Activated naive CD4-positive, alpha-beta T cell treated with anti-CD3 and anti-CD28 coated beads for 36 hours (primary cell): ENCODE measurements at regions of chr5 and their contacts with region 1.

Region 1: GRCh38 chr5:43631182-43631910 is 28.4 kb downstream of the NNT start:
- DNase-seq: peak; percentile 40
- H3K4me3 Mint-ChIP-seq: no peak overlapping the region
- H3K27ac Mint-ChIP-seq: no peak overlapping the region
- H3K4me1 Mint-ChIP-seq: no peaks in the 10 kb centered on the region
- H3K27me3 Mint-ChIP-seq: no peaks in the 10 kb centered on the region

Region 2: DNA sequence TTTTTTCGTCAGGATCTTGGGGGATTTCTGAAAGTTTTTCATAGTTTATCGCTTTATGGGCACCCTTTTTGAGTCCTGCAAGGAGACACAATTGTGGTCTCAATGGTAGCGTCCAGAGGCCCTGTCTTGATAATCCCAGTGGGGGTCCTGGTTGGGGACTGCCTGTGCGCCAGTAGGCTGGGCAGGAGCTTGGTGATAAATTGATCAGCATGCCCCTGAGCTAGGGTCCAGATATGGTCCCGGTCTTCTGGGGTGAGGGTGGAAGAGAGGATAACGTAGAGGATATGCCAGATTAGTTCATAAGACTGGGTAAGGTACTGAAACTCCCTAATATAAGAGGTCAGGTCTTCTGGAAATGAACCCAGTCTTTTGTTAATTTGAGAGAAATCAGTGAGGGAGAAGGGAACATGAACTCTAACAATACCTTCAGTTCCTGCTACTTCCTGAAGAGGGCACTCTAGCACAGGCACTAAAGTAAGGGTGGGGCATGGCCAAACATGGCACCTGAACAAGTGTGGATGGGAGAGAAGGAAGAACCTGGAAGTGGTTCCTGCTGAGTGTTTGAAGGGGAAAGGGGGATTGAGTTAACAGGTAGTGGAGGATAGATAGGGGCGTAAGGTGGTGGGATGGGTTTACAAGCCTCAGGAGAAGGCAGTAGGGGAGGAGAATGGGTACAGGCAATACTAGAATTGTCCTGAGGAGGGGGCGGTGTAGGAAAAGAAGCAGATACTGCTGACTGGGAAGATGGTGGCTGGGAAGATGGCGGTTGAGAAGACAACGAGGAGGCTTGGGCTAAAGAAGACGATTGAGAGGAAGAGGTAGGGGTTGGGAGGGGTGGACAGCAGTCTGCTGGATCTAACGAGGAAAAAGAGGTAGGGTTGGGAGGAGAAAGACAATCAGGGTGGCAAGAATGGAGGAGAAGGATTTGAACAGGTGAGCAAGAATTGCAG is 557.5 kb before region 1 on chr5:
- CTCF ChIA-PET with region 1: interaction called, 3 read pairs
- intact Hi-C with region 1: loop called (anchors 1 kb)
- DNase-seq: peak; percentile 70
- H3K4me3 Mint-ChIP-seq: no peak overlapping the region
- H3K27ac Mint-ChIP-seq: peak overlapping the region; percentile 43
- H3K4me1 Mint-ChIP-seq: peaks cover 39% of the 10 kb centered on the region
- H3K27me3 Mint-ChIP-seq: no peaks in the 10 kb centered on the region

Region 3: GRCh38 chr5:43609752-43610151 is 21.6 kb before region 1 on chr5:
- CTCF ChIA-PET with region 1: interaction called, 14 read pairs
- intact Hi-C with region 1: no loop called
- DNase-seq: peak; percentile 13
- H3K4me3 Mint-ChIP-seq: no peak overlapping the region
- H3K27ac Mint-ChIP-seq: no peak overlapping the region
- H3K4me1 Mint-ChIP-seq: peaks cover 26% of the 10 kb centered on the region
- H3K27me3 Mint-ChIP-seq: no peaks in the 10 kb centered on the region

Region 4: GRCh38 chr5:43616535-43616934 is 14.8 kb before region 1 on chr5:
- CTCF ChIA-PET with region 1: interaction called, 16 read pairs
- intact Hi-C with region 1: no loop called
- DNase-seq: no peak
- H3K4me3 Mint-ChIP-seq: no peak overlapping the region
- H3K27ac Mint-ChIP-seq: no peak overlapping the region
- H3K4me1 Mint-ChIP-seq: peaks cover 1% of the 10 kb centered on the region
- H3K27me3 Mint-ChIP-seq: no peaks in the 10 kb centered on the region

Region 5: DNA sequence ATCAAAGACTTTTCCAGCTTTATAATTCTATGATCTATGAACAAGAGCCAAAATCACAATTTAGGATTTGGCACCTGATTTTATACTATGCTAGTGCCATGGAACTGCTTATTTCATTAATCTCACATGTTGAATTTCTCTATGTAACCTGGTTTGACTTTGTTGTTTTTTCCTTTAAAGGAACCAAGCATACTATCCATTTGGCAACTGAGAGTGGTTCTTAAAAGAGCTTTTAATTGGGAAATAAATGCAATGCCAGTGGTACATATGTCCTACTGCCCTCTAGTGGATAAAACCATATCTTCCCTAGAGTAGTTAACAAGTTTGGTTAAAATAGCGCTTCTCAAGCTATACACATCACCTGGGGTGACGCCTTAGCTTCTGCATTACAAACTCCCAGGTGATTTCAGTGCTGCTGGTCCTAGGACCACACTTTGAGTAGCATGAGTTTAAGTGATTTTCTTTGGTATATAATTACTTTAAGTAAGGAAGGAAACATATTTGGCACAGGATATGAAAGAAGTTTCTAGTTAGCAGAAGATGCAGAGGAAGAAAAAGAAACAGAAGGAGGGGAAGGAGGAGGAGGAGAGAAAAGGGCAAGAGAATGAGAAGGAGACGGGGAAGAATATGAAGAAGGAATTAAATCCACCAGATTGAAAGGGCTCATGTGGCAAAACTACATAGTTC is 701.1 kb after region 1 on chr5:
- CTCF ChIA-PET with region 1: no interaction called
- intact Hi-C with region 1: loop called (anchors 1 kb)
- DNase-seq: no peak
- H3K4me3 Mint-ChIP-seq: no peak overlapping the region
- H3K27ac Mint-ChIP-seq: no peak overlapping the region
- H3K4me1 Mint-ChIP-seq: no peaks in the 10 kb centered on the region
- H3K27me3 Mint-ChIP-seq: no peaks in the 10 kb centered on the region

Region 6: DNA sequence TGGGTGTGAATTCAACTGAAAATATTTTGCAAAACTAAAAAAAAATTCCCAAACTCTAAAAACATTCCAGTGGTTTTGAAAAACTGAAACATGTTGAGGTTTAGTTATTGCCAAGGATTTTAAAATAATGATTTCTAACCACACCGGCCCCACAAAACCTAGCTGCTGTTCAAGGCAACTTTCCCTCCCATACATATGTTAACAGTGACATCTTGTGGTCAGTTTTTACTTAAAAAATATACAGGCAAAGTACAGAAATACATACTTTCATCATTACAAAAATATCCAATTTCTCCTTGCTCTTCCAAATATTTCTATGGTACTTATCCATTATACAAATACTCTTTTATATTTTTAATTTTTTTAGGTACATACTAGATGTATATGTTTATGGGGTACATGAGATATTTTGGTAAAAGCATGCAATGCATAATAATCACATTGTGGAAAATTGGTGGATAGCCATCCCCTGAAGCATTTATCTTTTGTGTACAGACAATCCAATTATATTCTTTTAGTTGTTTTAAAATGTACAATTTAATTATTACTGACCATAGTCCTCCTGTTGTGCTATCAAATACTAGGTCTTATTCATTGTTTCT is 1143.0 kb after region 1 on chr5:
- CTCF ChIA-PET with region 1: interaction called, 3 read pairs
- intact Hi-C with region 1: loop called (anchors 5 kb)
- DNase-seq: no peak
- H3K4me3 Mint-ChIP-seq: no peak overlapping the region
- H3K27ac Mint-ChIP-seq: no peak overlapping the region
- H3K4me1 Mint-ChIP-seq: no peaks in the 10 kb centered on the region
- H3K27me3 Mint-ChIP-seq: peaks cover 9% of the 10 kb centered on the region

Region 7: GRCh38 chr5:44808435-44809214 is 1177.3 kb after region 1 on chr5 and contains the start of gene MRPS30:
- CTCF ChIA-PET with region 1: no interaction called
- intact Hi-C with region 1: loop called (anchors 5 kb)
- DNase-seq: peak; percentile 96
- H3K4me3 Mint-ChIP-seq: peak within 1 kb of the TSS; percentile 96
- H3K27ac Mint-ChIP-seq: peak within 1 kb of the TSS; percentile 95
- H3K4me1 Mint-ChIP-seq: peaks cover 16% of the 10 kb centered on the region
- H3K27me3 Mint-ChIP-seq: peaks cover 1% of the 10 kb centered on the region
- total RNA-seq, gene MRPS30: 46.1 to 49.3 TPM